ENCODE measurements at regions of chr17 and their contacts with region 1.

Region 1: DNA sequence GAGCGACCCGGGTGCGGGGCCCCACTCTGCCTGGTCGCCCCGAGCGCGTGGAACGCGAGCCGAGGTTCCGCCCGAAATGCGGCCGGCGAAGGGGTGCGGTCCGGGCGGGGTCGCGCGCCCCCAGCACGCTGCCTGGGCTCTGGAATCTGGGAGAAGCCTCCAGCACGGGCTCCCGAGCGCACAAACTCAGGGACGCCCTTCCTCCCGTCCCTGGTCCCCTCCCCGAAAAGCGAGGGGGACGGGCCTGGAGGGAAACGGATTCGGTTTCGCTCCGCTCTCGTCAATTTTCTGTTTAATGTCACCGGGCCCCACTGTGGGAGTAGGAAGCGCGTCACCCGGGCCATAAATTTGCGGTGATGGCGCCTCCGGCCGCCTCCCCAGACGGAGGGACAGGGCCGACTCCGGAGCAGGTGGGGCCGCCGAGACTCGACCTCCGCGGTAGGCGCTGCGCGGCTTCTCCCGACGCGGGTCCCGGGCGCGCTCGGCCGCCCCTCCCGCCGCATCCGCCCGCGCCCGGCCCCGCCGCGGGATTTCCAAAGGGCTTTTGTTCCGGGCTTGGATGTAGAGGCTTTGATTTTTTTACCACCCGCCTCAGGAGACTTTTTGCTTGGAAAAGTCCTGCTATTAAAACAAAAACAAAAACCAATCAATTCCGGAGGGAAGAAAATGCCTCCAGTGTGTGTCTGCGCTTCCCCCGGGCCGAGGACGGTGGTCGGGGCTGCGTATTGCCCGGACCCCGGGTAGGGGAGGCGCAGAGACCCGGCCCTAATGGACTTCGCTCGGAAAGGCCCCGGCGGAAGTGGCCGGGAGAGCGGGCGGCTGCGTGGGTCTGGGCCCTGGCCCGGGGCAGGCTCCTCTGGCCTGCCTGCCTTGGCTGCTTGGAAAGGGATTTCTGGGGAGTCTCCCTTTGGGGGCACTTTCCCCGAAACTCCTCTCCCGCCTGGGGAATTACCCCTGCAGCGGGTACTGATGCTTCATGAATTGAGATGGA is 7.9 kb upstream of the BAHCC1 start:
- DNase-seq: no peak
- H3K4me3 ChIP-seq: peak overlapping the region; percentile 79 to 89
- H3K27ac ChIP-seq: peak overlapping the region; percentile 89 to 93
- H3K4me1 ChIP-seq: peaks cover 11 to 34% of the 10 kb centered on the region in 2 donors
- H3K27me3 ChIP-seq: no peaks in the 10 kb centered on the region
- CTCF ChIP-seq: no peak

Region 2: DNA sequence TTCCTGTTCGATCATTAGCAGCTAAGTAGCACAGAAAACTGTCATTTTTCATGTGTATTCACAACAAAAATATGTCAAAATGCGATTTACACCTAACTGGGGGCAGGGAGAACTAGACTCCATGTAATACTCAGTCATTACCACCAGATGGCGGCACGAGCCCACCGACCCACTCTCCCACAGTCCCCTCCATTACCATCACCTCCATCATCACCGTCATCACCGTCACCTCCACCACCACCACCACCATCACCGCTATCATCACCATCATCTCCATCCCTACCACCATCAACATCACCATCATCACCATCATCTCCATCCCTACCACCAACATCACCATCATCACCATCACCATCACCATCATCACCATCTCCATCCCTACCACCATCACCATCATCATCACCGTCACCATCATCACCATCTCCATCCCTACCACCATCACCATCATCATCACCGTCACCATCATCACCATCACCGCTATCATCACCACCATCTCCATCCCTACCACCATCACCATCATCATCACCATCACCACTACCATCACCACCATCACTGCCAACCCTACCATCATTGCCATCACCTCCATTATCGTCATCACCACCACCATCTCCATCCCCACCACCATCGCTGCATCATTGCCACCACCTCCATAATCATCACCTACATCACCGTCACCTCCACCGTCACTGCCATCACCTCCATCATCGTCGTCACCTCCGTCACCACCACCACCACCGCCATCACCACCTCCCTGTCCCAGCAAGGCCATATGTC is 133.8 kb before region 1 on chr17:
- intact Hi-C with region 1: loop called (anchors 2 kb)
- DNase-seq: no peak
- H3K4me3 ChIP-seq: no peak overlapping the region
- H3K27ac ChIP-seq: no peak overlapping the region
- H3K4me1 ChIP-seq: peaks cover 0 to 13% of the 10 kb centered on the region in 2 donors
- H3K27me3 ChIP-seq: no peaks in the 10 kb centered on the region
- CTCF ChIP-seq: peak; percentile 75 to 82 (median 76)

Measured in ascending aorta (tissue), 2 donors.